ENCODE measurements at regions of chr16 and their contacts with region 1.

Region 1: GRCh38 chr16:21158208-21159110 is at the start of gene LDAF1:
- DNase-seq: peak; percentile 94
- H3K4me3 Mint-ChIP-seq: peak within 1 kb of the TSS; percentile 100
- H3K27ac Mint-ChIP-seq: peak within 1 kb of the TSS; percentile 87
- H3K4me1 Mint-ChIP-seq: peaks cover 42% of the 10 kb centered on the region
- H3K27me3 Mint-ChIP-seq: no peaks in the 10 kb centered on the region
- CTCF ChIP-seq: no peak
- total RNA-seq, gene LDAF1: 46.7 and 50.1 TPM in 2 replicates

Region 2: GRCh38 chr16:22321339-22322001 is 1163.0 kb after region 1 on chr16:
- CTCF ChIA-PET with region 1: interaction called, 6 read pairs
- intact Hi-C with region 1: loop called (anchors 5 kb)
- DNase-seq: peak; percentile 69
- H3K4me3 Mint-ChIP-seq: no peak overlapping the region
- H3K27ac Mint-ChIP-seq: no peak overlapping the region
- H3K4me1 Mint-ChIP-seq: no peaks in the 10 kb centered on the region
- H3K27me3 Mint-ChIP-seq: no peaks in the 10 kb centered on the region
- CTCF ChIP-seq: peak; percentile 93

Measured in Calu3 (cell line).